H1 (cell line): ENCODE measurements at regions of chr20 and their contacts with region 1.

Region 1: GRCh38 chr20:37327748-37328147 is 18.2 kb upstream of the SRC start:
- DNase-seq: no peak
- H3K4me3 ChIP-seq: no peak overlapping the region
- H3K27ac ChIP-seq: no peak overlapping the region
- H3K4me1 ChIP-seq: 0 out of 7 replicates have a peak, but pooled peaks cover 0 to 3% (median 0%) of the 10 kb centered on the region in 4 experiments
- H3K27me3 ChIP-seq: no peaks in the 10 kb centered on the region
- CTCF ChIP-seq: no peak
- EP300 ChIP-seq: no peak
- POLR2A ChIP-seq: no peak
- RAD21 ChIP-seq: no peak

Region 2: GRCh38 chr20:37282556-37282955 is 45.2 kb before region 1 on chr20:
- CTCF ChIA-PET with region 1: interaction called, 19 read pairs
- POLR2A ChIA-PET with region 1: no interaction called
- DNase-seq: no peak
- H3K4me3 ChIP-seq: no peak overlapping the region
- H3K27ac ChIP-seq: no peak overlapping the region
- H3K4me1 ChIP-seq: peaks cover 0 to 16% (median 0%) of the 10 kb centered on the region in 4 experiments; a peak in 3 of 7 replicates
- H3K27me3 ChIP-seq: 0 out of 7 replicates have a peak, but pooled peaks cover 0 to 4% (median 0%) of the 10 kb centered on the region in 4 experiments
- CTCF ChIP-seq: peak in 2 of 3 experiments; percentile 41 to 56; a peak in 2 of 4 replicates
- EP300 ChIP-seq: no peak
- POLR2A ChIP-seq: no peak
- RAD21 ChIP-seq: peak; percentile 70 to 73

Region 3: GRCh38 chr20:37315452-37316110 is 12.2 kb before region 1 on chr20:
- CTCF ChIA-PET with region 1: interaction called, 12 read pairs
- POLR2A ChIA-PET with region 1: interaction called, 13 read pairs
- DNase-seq: no peak
- H3K4me3 ChIP-seq: no peak overlapping the region
- H3K27ac ChIP-seq: no peak overlapping the region
- H3K4me1 ChIP-seq: peaks cover 2 to 9% (median 7%) of the 10 kb centered on the region in 4 experiments; a peak in 5 of 7 replicates
- H3K27me3 ChIP-seq: no peaks in the 10 kb centered on the region
- CTCF ChIP-seq: no peak
- EP300 ChIP-seq: no peak
- POLR2A ChIP-seq: no peak
- RAD21 ChIP-seq: no peak

Region 4: DNA sequence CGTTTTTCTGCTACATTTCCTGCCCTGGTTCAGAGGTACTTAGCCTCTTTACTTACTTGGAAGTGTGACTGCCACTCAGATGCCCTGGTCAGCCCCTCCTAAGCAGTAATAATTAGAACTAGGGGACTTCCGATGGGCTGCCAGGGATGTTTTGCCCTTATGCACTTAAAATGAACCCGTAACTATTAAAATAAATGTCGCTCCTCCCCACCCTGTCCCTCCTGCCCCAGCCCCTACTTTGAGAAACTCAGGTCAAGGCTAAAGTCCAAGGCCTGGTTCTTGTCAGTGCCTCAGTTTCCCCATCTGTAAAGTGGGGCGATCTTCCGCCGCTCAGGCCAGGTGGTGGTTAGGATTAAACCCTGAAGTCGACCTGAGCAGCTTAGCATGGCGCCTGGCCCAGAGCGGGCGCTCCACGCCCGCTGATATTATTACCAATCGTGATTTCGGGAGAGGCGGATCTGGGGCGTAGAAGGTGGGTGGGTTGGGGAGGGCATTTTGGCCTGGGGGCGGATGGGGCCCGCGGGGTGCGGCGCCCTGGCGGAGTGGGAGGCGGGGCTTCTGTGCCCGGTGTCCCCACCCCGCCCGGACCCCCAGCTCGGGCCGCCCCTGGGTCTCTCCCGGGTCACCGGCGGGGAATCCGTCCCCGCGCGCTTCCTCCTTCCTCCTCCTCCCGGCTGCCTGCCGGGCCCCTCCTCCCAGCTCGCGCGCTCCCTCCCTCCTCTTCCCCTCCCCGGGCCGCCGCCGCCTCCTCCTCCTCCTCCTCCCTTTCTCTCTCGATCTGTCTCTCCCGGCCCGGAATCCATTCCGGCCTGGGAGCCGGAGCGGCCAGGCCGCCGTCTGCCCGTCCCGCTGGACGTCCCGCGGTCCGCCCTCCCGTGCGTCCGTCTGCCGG is 17.8 kb after region 1 on chr20 and contains the start of gene SRC:
- CTCF ChIA-PET with region 1: interaction called, 8 read pairs
- POLR2A ChIA-PET with region 1: interaction called, 50 read pairs
- DNase-seq: peak; percentile 39 to 82
- H3K4me3 ChIP-seq: peak within 1 kb of the TSS; percentile 33 to 67 (median 48)
- H3K27ac ChIP-seq: no peak within 1 kb of the TSS; the same call in 1 of the 2 replicates
- H3K4me1 ChIP-seq: peaks cover 0 to 11% (median 6%) of the 10 kb centered on the region in 4 experiments; a peak in 4 of 7 replicates
- H3K27me3 ChIP-seq: no peaks in the 10 kb centered on the region
- CTCF ChIP-seq: no peak
- EP300 ChIP-seq: no peak
- POLR2A ChIP-seq: peak in 1 of 2 experiments; percentile 73; a peak in 1 of 3 replicates
- RAD21 ChIP-seq: no peak
- total RNA-seq, gene SRC: 28.8 and 29.8 TPM in 2 replicates